Ovary (tissue), 10 donors: ENCODE measurements at regions of chr3 and their contacts with region 1.

Region 1: GRCh38 chr3:4986782-4987537 is 7.7 kb downstream of the BHLHE40 start:
- DNase-seq: peak; percentile 98 to 99 (median 99)
- H3K4me3 ChIP-seq: peak overlapping the region; percentile 45
- H3K27ac ChIP-seq: peak overlapping the region; percentile 78 to 94
- H3K4me1 ChIP-seq: peaks cover 7% of the 10 kb centered on the region
- H3K27me3 ChIP-seq: no peaks in the 10 kb centered on the region
- CTCF ChIP-seq: peak in 2 of 3 donors; percentile 5 to 16
- EP300 ChIP-seq: peak; percentile 98
- POLR2A ChIP-seq: peak; percentile 46

Region 2: DNA sequence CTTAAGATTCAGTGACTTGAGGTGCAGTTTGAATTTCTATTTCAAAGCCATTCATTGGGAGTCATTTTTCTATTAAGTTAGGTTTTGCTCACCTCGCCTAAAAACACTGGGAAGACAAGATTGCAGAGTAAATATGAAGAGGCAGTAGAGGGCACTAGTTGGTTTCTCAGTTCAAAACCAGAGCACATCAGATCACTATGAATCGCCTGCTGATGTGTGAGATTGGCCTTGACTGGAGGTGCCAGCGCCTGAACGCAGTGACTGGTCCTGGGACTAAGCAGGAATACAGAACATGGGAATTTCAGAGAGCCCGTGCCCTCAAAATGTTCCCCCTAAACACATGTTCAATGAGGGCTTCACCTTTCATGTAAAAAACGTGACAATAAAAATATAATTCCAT is 264.9 kb before region 1 on chr3:
- intact Hi-C with region 1: loop called in 2 of 4 experiments (anchors 5 to 10 kb)
- DNase-seq: peak in 2 of 5 donors; percentile 53 to 66
- H3K4me3 ChIP-seq: no peak overlapping the region
- H3K27ac ChIP-seq: peak overlapping the region; percentile 46 to 73
- H3K4me1 ChIP-seq: peaks cover 11% of the 10 kb centered on the region
- H3K27me3 ChIP-seq: no peaks in the 10 kb centered on the region
- CTCF ChIP-seq: peak in 2 of 3 donors; percentile 31 to 41
- EP300 ChIP-seq: no peak
- POLR2A ChIP-seq: no peak

Region 3: GRCh38 chr3:4814305-4814903 is 172.6 kb before region 1 on chr3:
- intact Hi-C with region 1: loop called in 1 of 4 experiments (anchors 10 kb)
- DNase-seq: no peak
- H3K4me3 ChIP-seq: no peak overlapping the region
- H3K27ac ChIP-seq: no peak overlapping the region
- H3K4me1 ChIP-seq: no peaks in the 10 kb centered on the region
- H3K27me3 ChIP-seq: no peaks in the 10 kb centered on the region
- CTCF ChIP-seq: no peak
- EP300 ChIP-seq: no peak
- POLR2A ChIP-seq: no peak

Region 4: DNA sequence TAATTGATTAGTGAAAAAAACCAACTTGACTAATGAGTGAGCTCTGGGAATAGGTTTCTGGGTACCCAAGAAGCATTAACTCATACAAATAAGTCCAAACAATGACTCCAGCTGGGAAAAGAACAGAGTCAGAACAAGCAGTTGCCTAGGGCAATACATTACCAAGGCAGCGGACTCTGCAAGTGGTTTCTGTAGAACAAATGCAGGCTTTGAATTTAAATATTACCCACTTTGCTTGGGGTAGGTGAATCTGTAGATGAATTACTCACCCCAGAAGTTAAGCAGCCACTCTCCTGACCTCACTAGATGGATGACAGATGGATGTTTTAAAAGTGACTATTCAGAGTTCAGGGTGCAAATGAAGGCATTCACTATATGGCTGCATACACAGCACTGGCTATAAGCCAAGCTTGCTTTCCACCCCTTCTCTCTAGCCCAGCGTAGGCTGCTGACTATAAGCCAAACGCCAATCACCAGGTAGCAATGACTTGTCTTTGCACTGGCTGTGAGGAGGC is 80.8 kb before region 1 on chr3:
- intact Hi-C with region 1: no loop called
- DNase-seq: no peak
- H3K4me3 ChIP-seq: no peak overlapping the region
- H3K27ac ChIP-seq: no peak overlapping the region
- H3K4me1 ChIP-seq: peaks cover 2% of the 10 kb centered on the region
- H3K27me3 ChIP-seq: no peaks in the 10 kb centered on the region
- CTCF ChIP-seq: no peak
- EP300 ChIP-seq: no peak
- POLR2A ChIP-seq: no peak